Activated CD4-positive, alpha-beta T cell treated with anti-CD3 and anti-CD28 coated beads for 36 hours (primary cell): ENCODE measurements at regions of chr1 and their contacts with region 1.

Region 1: GRCh38 chr1:153494976-153495535 is 34.6 kb upstream of the S100A7 start:
- DNase-seq: peak; percentile 90
- ATAC-seq: peak; percentile 90
- H3K4me3 Mint-ChIP-seq: no peak overlapping the region
- H3K27ac Mint-ChIP-seq: no peak overlapping the region
- H3K4me1 Mint-ChIP-seq: no peaks in the 10 kb centered on the region
- H3K27me3 Mint-ChIP-seq: peaks cover 14% of the 10 kb centered on the region

Region 2: GRCh38 chr1:153465811-153466636 is 29.0 kb before region 1 on chr1:
- CTCF ChIA-PET with region 1: interaction called, 19 read pairs
- POLR2A ChIA-PET with region 1: no interaction called
- intact Hi-C with region 1: loop called (anchors 1 kb)
- DNase-seq: peak; percentile 83
- ATAC-seq: peak; percentile 81
- H3K4me3 Mint-ChIP-seq: no peak overlapping the region
- H3K27ac Mint-ChIP-seq: no peak overlapping the region
- H3K4me1 Mint-ChIP-seq: peaks cover 4% of the 10 kb centered on the region
- H3K27me3 Mint-ChIP-seq: peaks cover 20% of the 10 kb centered on the region

Region 3: GRCh38 chr1:153525088-153525728 is 30.2 kb after region 1 on chr1:
- CTCF ChIA-PET with region 1: interaction called, 10 read pairs
- POLR2A ChIA-PET with region 1: no interaction called
- intact Hi-C with region 1: no loop called
- DNase-seq: no peak
- ATAC-seq: no peak
- H3K4me3 Mint-ChIP-seq: no peak overlapping the region
- H3K27ac Mint-ChIP-seq: no peak overlapping the region
- H3K4me1 Mint-ChIP-seq: peaks cover 2% of the 10 kb centered on the region
- H3K27me3 Mint-ChIP-seq: no peaks in the 10 kb centered on the region

Region 4: DNA sequence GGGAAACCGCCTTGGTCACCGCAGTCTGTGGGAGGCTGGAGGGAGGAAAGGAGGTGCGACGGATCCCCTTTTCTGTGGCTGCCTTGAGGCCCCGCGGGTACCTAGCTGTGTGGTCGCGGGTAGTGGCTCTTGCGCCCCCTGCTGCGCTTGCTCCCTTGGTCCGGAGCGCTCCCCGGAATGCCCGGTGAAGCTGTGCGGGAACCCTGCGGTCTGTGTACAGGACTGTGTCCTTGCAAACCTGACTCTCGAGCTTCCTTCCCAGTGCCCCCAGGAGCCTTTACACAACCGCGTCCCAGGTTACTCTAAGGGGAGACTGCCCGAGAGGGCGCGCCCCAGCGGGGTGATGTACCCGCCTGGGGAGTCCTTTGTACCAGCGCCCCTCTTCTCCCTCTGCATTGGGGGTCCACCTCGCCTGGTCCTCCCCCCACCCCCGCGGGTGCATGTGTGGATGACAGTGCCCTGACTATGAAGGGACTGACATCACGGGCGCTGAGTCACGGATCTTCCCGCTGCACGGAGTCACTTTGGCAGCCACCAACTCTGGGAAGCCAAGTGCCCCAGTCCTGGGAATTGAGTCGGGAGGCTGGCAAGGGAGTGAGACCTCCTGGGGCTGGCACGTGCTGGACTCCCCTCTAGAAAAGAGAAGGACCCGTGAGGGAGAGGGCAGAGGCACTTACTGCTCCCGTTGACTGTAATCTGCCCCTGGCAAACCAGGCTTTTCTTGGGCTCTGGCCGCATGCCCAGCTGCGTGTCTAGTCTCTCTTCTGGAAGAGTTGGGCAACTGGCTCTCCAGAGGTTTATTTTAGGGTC is 910.9 kb after region 1 on chr1:
- CTCF ChIA-PET with region 1: no interaction called
- POLR2A ChIA-PET with region 1: no interaction called
- intact Hi-C with region 1: no loop called
- DNase-seq: peak; percentile 87
- ATAC-seq: peak; percentile 28
- H3K4me3 Mint-ChIP-seq: peak overlapping the region; percentile 83
- H3K27ac Mint-ChIP-seq: peak overlapping the region; percentile 95
- H3K4me1 Mint-ChIP-seq: peaks cover 80% of the 10 kb centered on the region
- H3K27me3 Mint-ChIP-seq: no peaks in the 10 kb centered on the region